Cardiac septum (tissue), 1 donor: ENCODE measurements at regions of chr11 and their contacts with region 1.

Region 1: GRCh38 chr11:74449369-74449931 is 17.9 kb downstream of the KCNE3 start:
- DNase-seq: no peak

Region 2: GRCh38 chr11:74255741-74256369 is 193.6 kb before region 1 on chr11:
- intact Hi-C with region 1: loop called (anchors 2 kb)
- DNase-seq: no peak

Region 3: GRCh38 chr11:74388678-74389327 is 60.6 kb before region 1 on chr11:
- intact Hi-C with region 1: loop called (anchors 2 kb)
- DNase-seq: no peak

Region 4: DNA sequence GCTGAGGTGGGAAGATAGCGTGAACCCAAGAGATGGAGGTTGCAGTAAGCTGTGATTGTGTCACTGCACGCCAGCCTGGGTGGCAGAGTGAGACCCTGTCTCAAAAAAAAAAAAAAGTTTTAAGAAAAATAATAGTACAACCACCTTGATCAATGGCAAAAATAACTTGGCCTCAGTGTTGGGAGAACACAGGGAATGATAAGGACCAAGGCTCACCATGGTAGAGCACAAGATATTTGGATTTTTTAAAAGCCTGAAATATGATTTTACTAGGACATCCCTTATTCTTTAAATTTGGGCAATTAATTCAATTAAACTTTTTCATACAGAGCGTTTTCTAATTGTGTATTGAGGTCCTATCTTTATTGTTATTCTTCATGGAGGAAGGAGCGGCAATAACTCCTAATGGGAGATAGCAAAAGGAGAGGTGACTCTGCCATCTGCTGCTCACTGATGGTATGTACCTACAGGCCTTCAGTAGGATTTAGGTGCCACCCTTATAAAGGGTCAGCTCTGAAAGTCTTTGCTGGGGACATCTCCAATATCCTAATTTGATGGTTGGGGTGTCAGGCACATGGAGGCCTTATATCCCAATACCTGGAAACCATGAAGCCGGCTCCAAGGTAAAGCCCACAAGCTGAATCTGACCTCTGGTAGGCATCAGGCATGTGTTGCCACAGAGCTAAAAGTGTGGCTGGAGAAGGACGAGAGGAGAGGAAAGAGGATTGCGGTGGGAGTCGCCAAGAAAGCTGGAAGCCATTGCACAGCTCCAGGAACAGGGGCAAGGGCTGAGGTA is 121.0 kb after region 1 on chr11:
- intact Hi-C with region 1: loop called (anchors 2 kb)
- DNase-seq: no peak